Activated naive CD4-positive, alpha-beta T cell treated with anti-CD3 and anti-CD28 coated beads, Interleukin-2, amount 10 ng/mL, durations not matched to agents 7 days and 5 days (primary cell): ENCODE measurements at regions of chr17 and their contacts with region 1.

Region 1: DNA sequence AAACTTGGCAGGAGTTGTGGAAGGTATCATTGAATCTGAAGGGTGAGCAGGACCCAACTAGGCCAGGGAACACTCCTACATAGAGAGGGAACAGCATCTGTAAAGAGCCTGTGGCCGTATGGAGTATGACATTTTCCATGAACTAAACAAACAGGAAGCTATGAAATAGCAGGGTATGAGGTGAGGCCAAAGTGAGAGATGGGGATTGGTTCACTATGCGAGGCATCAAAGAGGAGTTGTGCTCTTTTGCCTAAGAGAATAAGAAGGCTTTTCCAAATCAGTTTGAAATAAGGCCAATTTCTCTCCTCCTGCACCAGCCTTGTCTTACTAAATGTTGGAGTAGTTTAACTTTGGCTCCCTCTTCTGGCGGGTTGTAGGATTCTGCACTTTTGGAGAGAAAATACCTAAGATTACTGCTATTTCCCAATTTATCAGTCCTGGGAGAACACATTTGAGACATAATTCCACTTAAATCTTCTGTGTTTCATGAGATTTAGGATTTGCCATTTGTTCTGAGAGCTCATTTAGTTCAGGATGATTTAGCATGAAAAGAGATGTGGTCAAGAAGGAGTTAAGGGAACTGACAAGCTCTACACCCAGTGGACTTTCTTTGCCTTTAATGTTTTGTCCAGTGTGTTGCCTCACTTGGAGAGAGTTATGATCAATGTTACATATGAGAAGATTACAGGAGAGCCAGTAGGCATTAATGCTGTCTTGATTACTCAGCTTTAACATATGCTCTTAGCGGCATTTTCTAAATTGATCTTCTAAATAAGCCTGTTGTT is 55.4 kb downstream of the TNRC6C start:
- DNase-seq: peak; percentile 68
- H3K4me3 Mint-ChIP-seq: no peak overlapping the region
- H3K27ac Mint-ChIP-seq: no peak overlapping the region
- H3K4me1 Mint-ChIP-seq: peaks cover 17% of the 10 kb centered on the region
- H3K27me3 Mint-ChIP-seq: no peaks in the 10 kb centered on the region

Region 2: GRCh38 chr17:77772461-77772897 is 241.4 kb before region 1 on chr17:
- CTCF ChIA-PET with region 1: interaction called, 15 read pairs
- DNase-seq: peak; percentile 75
- H3K4me3 Mint-ChIP-seq: no peak overlapping the region
- H3K27ac Mint-ChIP-seq: peak overlapping the region; percentile 60
- H3K4me1 Mint-ChIP-seq: peaks cover 14% of the 10 kb centered on the region
- H3K27me3 Mint-ChIP-seq: peaks cover 63% of the 10 kb centered on the region

Region 3: GRCh38 chr17:77842528-77843147 is 171.2 kb before region 1 on chr17:
- CTCF ChIA-PET with region 1: no interaction called
- DNase-seq: no peak
- H3K4me3 Mint-ChIP-seq: no peak overlapping the region
- H3K27ac Mint-ChIP-seq: peak overlapping the region; percentile 1
- H3K4me1 Mint-ChIP-seq: peaks cover 50% of the 10 kb centered on the region
- H3K27me3 Mint-ChIP-seq: peaks cover 53% of the 10 kb centered on the region

Region 4: DNA sequence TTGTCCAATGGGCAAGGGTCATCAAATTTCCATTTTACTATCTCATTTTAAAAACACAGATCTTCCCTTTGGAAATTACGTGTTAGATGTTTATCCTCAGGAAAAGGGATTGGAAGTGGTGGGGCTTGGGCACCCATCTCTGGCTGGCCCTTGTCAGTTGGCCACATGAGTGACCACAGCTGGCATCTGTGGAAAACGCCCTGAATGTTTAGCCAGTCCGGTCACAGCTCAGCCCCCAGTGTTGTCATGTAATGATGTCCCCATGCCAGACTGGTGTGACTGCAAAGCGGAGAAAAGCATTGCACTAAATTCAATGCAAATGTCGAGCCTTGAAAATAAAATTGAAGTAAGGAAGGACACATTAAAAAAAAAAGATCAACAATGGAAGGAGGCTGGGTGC is 61.7 kb after region 1 on chr17:
- CTCF ChIA-PET with region 1: no interaction called
- DNase-seq: no peak
- H3K4me3 Mint-ChIP-seq: no peak overlapping the region
- H3K27ac Mint-ChIP-seq: peak overlapping the region; percentile 28
- H3K4me1 Mint-ChIP-seq: no peaks in the 10 kb centered on the region
- H3K27me3 Mint-ChIP-seq: no peaks in the 10 kb centered on the region